K562 (cell line): ENCODE measurements at regions of chr1 and their contacts with region 1.

Region 1: GRCh38 chr1:89615676-89616598 is 17.0 kb upstream of the LRRC8C start:
- DNase-seq: no peak
- ATAC-seq: peak; percentile 62
- H3K4me3 ChIP-seq: no peak overlapping the region
- H3K27ac ChIP-seq: no peak overlapping the region
- H3K4me1 ChIP-seq: no peaks in the 10 kb centered on the region
- H3K27me3 ChIP-seq: no peaks in the 10 kb centered on the region
- CTCF ChIP-seq: peak; percentile 27 to 38 (median 31); a peak in 3 of 6 replicates
- EP300 ChIP-seq: no peak
- POLR2A ChIP-seq: no peak
- RAD21 ChIP-seq: 0 out of 4 replicates have a peak, but pooled peaks of 1 of the 2 experiments have one; percentile 12

Region 2: GRCh38 chr1:88973520-88974137 is 642.3 kb before region 1 on chr1:
- CTCF ChIA-PET with region 1: no interaction called
- POLR2A ChIA-PET with region 1: no interaction called
- in situ Hi-C with region 1: loop called (anchors 10 kb)
- intact Hi-C with region 1: no loop called
- DNase-seq: peak in 3 of 4 experiments; percentile 24 to 48 (median 33)
- ATAC-seq: peak; percentile 68
- H3K4me3 ChIP-seq: no peak overlapping the region
- H3K27ac ChIP-seq: no peak overlapping the region
- H3K4me1 ChIP-seq: no peaks in the 10 kb centered on the region
- H3K27me3 ChIP-seq: no peaks in the 10 kb centered on the region
- CTCF ChIP-seq: peak; percentile 33 to 55 (median 55); a peak in 4 of 6 replicates
- EP300 ChIP-seq: no peak
- POLR2A ChIP-seq: no peak
- RAD21 ChIP-seq: peak; percentile 48 to 67; a peak in 3 of 4 replicates

Region 3: GRCh38 chr1:89407360-89407759 is 208.6 kb before region 1 on chr1:
- CTCF ChIA-PET with region 1: no interaction called
- POLR2A ChIA-PET with region 1: no interaction called
- in situ Hi-C with region 1: no loop called
- intact Hi-C with region 1: no loop called
- DNase-seq: no peak
- ATAC-seq: no peak
- H3K4me3 ChIP-seq: no peak overlapping the region
- H3K27ac ChIP-seq: no peak overlapping the region
- H3K4me1 ChIP-seq: no peaks in the 10 kb centered on the region
- H3K27me3 ChIP-seq: no peaks in the 10 kb centered on the region
- CTCF ChIP-seq: no peak
- EP300 ChIP-seq: no peak
- POLR2A ChIP-seq: no peak
- RAD21 ChIP-seq: no peak